Posterior vena cava (tissue), 2 donors: ENCODE measurements at regions of chr6 and their contacts with region 1.

Region 1: DNA sequence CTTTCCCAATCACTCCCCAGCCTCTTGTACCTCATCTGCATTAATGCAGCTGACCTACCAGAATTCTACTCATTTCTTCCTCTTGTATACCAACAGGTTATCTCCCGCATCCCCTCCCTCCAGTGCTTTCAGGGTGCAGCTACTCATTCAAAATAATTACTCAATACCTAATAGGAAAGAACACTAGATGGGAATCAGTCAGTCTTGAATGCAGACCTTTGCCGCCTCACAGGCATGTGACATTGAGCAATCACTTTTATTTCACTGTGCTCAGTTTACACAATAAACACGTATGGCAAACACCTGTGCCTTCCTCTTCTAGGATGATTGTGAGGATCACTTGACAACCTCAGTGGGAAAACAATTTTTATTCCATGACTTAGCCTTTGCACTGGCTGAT is 13.3 kb downstream of the ZSCAN31 start:
- DNase-seq: no peak

Region 2: DNA sequence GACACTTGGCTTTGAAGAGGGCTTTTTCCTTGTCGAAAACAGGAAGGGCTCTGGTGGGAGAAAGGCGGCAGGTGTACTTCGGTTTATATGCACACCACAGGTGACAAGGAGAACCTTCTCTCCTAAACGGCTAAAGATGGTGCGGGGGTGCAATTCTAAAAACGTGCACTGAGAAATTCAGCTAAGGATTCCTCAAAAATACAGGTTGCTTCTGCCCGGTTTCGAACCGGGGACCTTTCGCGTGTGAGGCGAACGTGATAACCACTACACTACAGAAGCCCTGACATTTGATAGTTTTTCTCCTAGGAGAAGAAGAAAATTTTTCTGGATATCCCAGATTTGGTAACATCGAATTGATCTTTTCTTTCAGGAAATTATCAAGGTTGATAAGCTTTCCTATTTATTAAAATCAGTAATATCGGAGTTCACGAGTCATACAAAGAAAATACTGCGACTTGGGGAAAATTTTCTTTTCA is 1042.6 kb before region 1 on chr6:
- intact Hi-C with region 1: no loop called
- DNase-seq: no peak

Region 3: GRCh38 chr6:29153083-29153482 is 830.4 kb after region 1 on chr6:
- intact Hi-C with region 1: loop called in 1 of 2 experiments (anchors 5 kb)
- DNase-seq: no peak